Transverse colon (tissue), 4 donors: ENCODE measurements at regions of chr10 and their contacts with region 1.

Region 1: DNA sequence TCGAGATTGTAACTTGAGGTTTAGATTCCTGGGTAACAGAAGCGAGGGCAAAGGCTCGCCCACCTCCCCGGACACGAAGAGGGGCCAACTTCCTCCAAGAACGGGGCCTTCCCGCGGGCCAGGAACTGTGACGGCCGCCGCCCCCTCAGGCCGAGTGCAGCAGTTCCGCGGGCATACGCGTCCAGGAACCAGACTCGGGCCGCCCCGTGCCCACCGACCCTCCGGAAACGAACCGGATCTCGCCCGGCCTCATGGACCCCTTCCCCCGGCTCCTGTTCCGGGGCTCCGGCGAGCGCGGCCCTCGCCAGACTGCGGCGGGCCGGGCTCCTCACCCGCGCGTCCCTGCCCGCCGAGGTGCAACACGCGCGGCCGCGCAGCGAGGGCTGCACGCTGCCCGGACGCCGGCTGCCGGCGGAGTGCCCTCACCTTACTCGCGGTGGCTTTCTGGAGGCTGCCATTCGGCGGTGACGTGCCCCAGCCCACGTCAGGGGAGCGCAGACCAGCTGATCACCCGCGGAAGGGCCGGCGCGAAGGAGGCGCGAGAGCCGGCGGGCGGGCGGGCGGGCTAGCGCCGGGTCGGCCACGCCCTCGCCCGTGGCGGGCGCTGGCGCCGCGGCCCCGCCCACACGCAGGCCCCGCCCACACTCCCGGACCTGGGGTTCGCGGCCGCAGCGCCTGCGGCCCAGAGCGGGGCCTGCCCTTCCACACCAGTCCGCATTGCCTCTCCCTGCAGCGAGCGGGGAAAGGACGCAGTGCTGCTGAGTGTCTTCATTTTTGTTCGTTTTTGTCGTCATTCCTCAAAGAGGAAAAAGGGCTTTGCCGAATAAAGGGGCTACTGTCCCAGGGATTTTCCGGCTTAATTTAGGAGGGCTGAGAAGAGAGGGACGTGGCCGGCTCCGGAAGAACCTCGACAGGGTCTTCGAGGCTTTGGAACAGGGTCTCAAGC is at the start of gene XPNPEP1:
- DNase-seq: peak; percentile 91
- H3K4me3 ChIP-seq: peak within 1 kb of the TSS; percentile 72 to 96 (median 93)
- H3K27ac ChIP-seq: peak within 1 kb of the TSS; percentile 91 to 98 (median 96)
- H3K4me1 ChIP-seq: peaks cover 0 to 34% (median 20%) of the 10 kb centered on the region in 4 donors
- H3K27me3 ChIP-seq: no peaks in the 10 kb centered on the region
- CTCF ChIP-seq: no peak
- EP300 ChIP-seq: no peak
- POLR2A ChIP-seq: peak; percentile 67
- total RNA-seq, gene XPNPEP1: 108 to 298 (median 127) TPM

Region 2: GRCh38 chr10:109895095-109895818 is 28.0 kb before region 1 on chr10:
- in situ Hi-C with region 1: no loop called
- intact Hi-C with region 1: loop called (anchors 1 kb)
- DNase-seq: no peak
- H3K4me3 ChIP-seq: no peak overlapping the region
- H3K27ac ChIP-seq: peak overlapping the region; percentile 53 to 77 (median 61)
- H3K4me1 ChIP-seq: peaks cover 13 to 59% (median 16%) of the 10 kb centered on the region in 4 donors
- H3K27me3 ChIP-seq: no peaks in the 10 kb centered on the region
- CTCF ChIP-seq: no peak
- EP300 ChIP-seq: no peak
- POLR2A ChIP-seq: no peak

Region 3: GRCh38 chr10:110007701-110008517 is 84.7 kb after region 1 on chr10 and contains the start of gene ADD3:
- in situ Hi-C with region 1: no loop called
- intact Hi-C with region 1: loop called (anchors 5 kb)
- DNase-seq: peak; percentile 95
- H3K4me3 ChIP-seq: peak within 1 kb of the TSS; percentile 85 to 89 (median 87)
- H3K27ac ChIP-seq: peak within 1 kb of the TSS; percentile 91 to 97 (median 92)
- H3K4me1 ChIP-seq: peaks cover 11 to 81% (median 53%) of the 10 kb centered on the region in 4 donors
- H3K27me3 ChIP-seq: no peaks in the 10 kb centered on the region
- CTCF ChIP-seq: peak in 1 of 5 experiments; percentile 14
- EP300 ChIP-seq: no peak
- POLR2A ChIP-seq: peak; percentile 79
- total RNA-seq, gene ADD3: 175 to 342 (median 258) TPM